ENCODE measurements at regions of chr2 and their contacts with region 1.

Region 1: DNA sequence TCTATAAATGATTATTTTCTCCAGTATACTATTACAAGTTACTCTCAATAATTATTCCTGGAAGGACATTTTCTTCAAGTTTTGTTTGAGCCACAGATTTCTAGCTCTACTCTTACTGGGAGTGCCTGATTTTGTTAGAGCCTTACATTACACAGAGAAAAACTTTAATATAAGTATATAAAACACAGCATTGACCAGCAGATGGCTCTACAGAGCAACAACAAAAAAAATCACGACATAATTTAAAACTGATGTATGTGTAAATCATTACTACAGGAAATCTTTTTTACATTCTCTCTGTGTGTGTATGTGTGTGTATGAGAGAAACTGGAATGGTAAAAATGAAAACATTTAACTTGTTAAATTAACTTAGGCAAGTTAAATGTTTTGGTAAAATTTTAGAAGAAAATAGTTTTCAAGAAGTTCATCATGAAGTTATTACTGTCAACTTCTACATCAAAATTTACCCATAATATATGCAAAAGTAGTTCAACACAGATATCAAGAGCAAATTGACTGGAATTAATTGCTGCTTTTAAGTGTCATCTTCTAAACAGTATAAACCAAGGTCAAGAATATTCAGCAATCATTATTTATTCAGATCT is 103.3 kb downstream of the MDH1 start:
- DNase-seq: no peak
- ATAC-seq: peak; percentile 69
- H3K4me3 ChIP-seq: no peak overlapping the region
- H3K27ac ChIP-seq: no peak overlapping the region
- H3K4me1 ChIP-seq: no peaks in the 10 kb centered on the region
- H3K27me3 ChIP-seq: no peaks in the 10 kb centered on the region
- CTCF ChIP-seq: peak; percentile 38 to 48 (median 42); a peak in 3 of 6 replicates
- EP300 ChIP-seq: no peak
- POLR2A ChIP-seq: no peak
- RAD21 ChIP-seq: peak; percentile 59

Region 2: DNA sequence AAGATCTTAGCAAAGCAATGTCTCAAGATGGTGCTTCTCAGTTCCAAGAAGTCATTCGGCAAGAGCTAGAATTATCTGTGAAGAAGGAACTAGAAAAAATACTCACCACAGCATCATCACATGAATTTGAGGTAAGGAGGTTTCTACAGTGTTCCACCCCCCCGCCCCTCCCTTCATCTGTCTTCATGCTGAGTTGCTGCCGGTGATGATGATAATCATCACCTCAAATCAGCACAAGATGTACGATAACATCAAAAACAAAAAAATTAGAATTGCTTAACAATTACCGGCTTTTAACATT is 164.1 kb after region 1 on chr2:
- CTCF ChIA-PET with region 1: interaction called, 170 read pairs
- POLR2A ChIA-PET with region 1: no interaction called
- RAD21 ChIA-PET with region 1: interaction called, 21 read pairs
- SMC1A ChIA-PET with region 1: interaction called, 11 read pairs
- in situ Hi-C with region 1: loop called (anchors 5 kb)
- intact Hi-C with region 1: loop called (anchors 1 kb)
- DNase-seq: no peak
- ATAC-seq: no peak
- H3K4me3 ChIP-seq: no peak overlapping the region
- H3K27ac ChIP-seq: no peak overlapping the region
- H3K4me1 ChIP-seq: no peaks in the 10 kb centered on the region
- H3K27me3 ChIP-seq: no peaks in the 10 kb centered on the region
- CTCF ChIP-seq: no peak
- EP300 ChIP-seq: no peak
- POLR2A ChIP-seq: no peak
- RAD21 ChIP-seq: no peak

Region 3: GRCh38 chr2:63888490-63889402 is 196.6 kb after region 1 on chr2:
- CTCF ChIA-PET with region 1: interaction called, 3 read pairs
- POLR2A ChIA-PET with region 1: no interaction called
- RAD21 ChIA-PET with region 1: no interaction called
- SMC1A ChIA-PET with region 1: no interaction called
- in situ Hi-C with region 1: no loop called
- intact Hi-C with region 1: loop called (anchors 1 kb)
- DNase-seq: peak; percentile 8
- ATAC-seq: peak; percentile 94
- H3K4me3 ChIP-seq: no peak overlapping the region
- H3K27ac ChIP-seq: no peak overlapping the region
- H3K4me1 ChIP-seq: no peaks in the 10 kb centered on the region
- H3K27me3 ChIP-seq: no peaks in the 10 kb centered on the region
- CTCF ChIP-seq: peak; percentile 65 to 79 (median 79); a peak in 5 of 6 replicates
- EP300 ChIP-seq: no peak
- POLR2A ChIP-seq: no peak
- RAD21 ChIP-seq: peak; percentile 89